ENCODE measurements at regions of chr20 and their contacts with region 1.

Region 1: DNA sequence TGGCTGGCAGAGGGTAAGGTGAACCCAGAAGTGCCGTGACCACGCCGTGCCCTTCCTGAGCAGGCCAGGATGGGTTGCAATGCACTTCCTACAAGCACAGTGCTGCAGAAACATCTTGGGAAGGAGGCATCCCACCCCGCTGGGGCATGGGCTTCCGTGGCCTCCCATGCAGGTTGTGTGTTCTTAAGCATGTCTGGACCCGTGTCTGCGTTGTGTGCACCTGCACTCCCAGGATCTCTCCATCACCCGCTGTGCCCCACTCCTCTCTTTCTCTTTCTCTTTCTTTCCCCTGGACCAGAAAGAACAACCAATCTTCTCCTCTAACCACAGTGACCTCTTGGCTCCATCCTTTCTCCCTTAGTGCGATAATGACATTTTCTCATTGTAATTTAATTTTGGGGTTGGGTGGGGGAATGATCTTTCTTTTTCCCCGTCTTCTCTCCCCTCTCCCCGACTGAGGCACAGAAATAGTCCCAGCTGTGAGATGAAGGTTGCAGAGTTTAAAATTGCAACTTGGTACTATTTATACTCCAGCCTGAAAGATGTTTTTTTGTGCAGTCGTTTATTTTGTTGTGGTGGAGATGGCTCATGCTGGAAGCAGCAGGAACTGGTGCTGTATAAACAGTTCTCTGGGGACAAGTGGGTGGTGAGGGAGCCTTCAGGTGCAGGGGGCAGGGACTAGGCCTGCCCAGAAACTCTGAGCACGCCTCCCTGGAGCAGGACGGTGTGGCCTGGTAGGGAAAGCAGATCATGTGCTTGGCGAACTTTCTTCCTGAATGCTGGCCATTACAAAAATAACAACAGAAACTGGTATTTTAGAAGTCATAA is 20.5 kb downstream of the BCAS4 start:
- DNase-seq: peak; percentile 59
- H3K4me3 ChIP-seq: no peak overlapping the region
- H3K27ac ChIP-seq: no peak overlapping the region
- H3K4me1 ChIP-seq: peaks cover 7% of the 10 kb centered on the region
- H3K27me3 ChIP-seq: no peaks in the 10 kb centered on the region
- CTCF ChIP-seq: no peak

Region 2: GRCh38 chr20:50844430-50845100 is 29.2 kb after region 1 on chr20:
- CTCF ChIA-PET with region 1: no interaction called
- dilution Hi-C with region 1: no loop called
- in situ Hi-C with region 1: no loop called
- intact Hi-C with region 1: loop called (anchors 2 kb)
- DNase-seq: peak; percentile 99
- H3K4me3 ChIP-seq: no peak overlapping the region
- H3K27ac ChIP-seq: peak overlapping the region; percentile 77
- H3K4me1 ChIP-seq: peaks cover 54% of the 10 kb centered on the region
- H3K27me3 ChIP-seq: no peaks in the 10 kb centered on the region
- CTCF ChIP-seq: no peak

Region 3: GRCh38 chr20:50913690-50914375 is 98.5 kb after region 1 on chr20:
- CTCF ChIA-PET with region 1: interaction called, 7 read pairs
- dilution Hi-C with region 1: no loop called
- in situ Hi-C with region 1: loop called in 1 of 2 experiments (anchors 10 kb)
- intact Hi-C with region 1: no loop called
- DNase-seq: peak; percentile 67
- H3K4me3 ChIP-seq: no peak overlapping the region
- H3K27ac ChIP-seq: peak overlapping the region; percentile 3
- H3K4me1 ChIP-seq: peaks cover 37% of the 10 kb centered on the region
- H3K27me3 ChIP-seq: no peaks in the 10 kb centered on the region
- CTCF ChIP-seq: no peak

Region 4: DNA sequence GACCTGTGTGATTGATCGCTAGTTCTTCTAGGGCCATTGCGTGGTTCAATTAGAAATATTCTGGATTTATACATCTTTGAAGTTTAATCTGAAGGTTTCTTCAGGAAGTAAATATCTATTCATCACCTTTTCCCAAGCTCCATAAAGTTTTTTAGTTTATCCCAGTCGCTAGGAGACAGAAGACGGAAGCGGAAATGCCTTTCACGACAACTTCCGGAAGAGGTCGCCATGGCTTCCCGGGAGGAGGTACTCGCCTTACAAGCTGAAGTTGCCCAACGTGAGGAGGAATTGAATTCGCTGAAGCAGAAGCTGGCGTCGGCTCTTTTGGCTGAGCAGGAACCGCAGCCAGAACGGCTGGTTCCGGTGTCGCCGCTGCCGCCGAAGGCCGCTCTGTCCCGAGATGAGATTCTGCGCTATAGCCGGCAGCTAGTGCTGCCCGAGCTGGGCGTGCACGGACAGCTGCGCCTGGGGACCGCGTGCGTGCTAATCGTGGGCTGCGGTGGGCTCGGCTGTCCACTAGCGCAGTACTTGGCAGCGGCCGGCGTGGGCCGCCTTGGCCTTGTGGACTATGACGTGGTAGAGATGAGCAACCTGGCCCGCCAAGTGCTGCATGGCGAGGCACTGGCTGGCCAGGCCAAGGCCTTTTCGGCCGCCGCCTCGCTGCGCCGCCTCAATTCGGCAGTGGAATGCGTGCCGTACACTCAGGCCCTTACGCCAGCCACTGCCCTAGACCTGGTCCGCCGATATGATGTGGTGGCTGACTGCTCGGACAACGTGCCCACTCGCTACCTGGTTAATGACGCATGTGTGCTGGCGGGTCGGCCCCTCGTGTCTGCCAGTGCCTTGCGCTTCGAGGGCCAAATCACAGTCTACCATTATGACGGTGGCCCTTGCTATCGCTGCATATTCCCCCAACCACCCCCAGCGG is 143.5 kb after region 1 on chr20 and contains the start of gene MOCS3:
- CTCF ChIA-PET with region 1: no interaction called
- dilution Hi-C with region 1: loop called (anchors 10 kb)
- in situ Hi-C with region 1: no loop called
- intact Hi-C with region 1: loop called (anchors 1 kb)
- DNase-seq: peak; percentile 86
- H3K4me3 ChIP-seq: peak within 1 kb of the TSS; percentile 78 to 100 (median 99)
- H3K27ac ChIP-seq: peak within 1 kb of the TSS; percentile 99
- H3K4me1 ChIP-seq: peaks cover 29% of the 10 kb centered on the region
- H3K27me3 ChIP-seq: no peaks in the 10 kb centered on the region
- CTCF ChIP-seq: no peak
- total RNA-seq, gene MOCS3: 7.2 to 10.8 TPM

Region 5: GRCh38 chr20:50980851-50981713 is 165.7 kb after region 1 on chr20:
- CTCF ChIA-PET with region 1: no interaction called
- dilution Hi-C with region 1: no loop called
- in situ Hi-C with region 1: no loop called
- intact Hi-C with region 1: loop called (anchors 1 kb)
- DNase-seq: peak; percentile 52
- H3K4me3 ChIP-seq: no peak overlapping the region
- H3K27ac ChIP-seq: peak overlapping the region; percentile 84
- H3K4me1 ChIP-seq: peaks cover 34% of the 10 kb centered on the region
- H3K27me3 ChIP-seq: no peaks in the 10 kb centered on the region
- CTCF ChIP-seq: peak; percentile 70 to 91

Measured in mammary epithelial cell (primary cell).